ENCODE measurements at regions of chr6 and their contacts with region 1.

Region 1: DNA sequence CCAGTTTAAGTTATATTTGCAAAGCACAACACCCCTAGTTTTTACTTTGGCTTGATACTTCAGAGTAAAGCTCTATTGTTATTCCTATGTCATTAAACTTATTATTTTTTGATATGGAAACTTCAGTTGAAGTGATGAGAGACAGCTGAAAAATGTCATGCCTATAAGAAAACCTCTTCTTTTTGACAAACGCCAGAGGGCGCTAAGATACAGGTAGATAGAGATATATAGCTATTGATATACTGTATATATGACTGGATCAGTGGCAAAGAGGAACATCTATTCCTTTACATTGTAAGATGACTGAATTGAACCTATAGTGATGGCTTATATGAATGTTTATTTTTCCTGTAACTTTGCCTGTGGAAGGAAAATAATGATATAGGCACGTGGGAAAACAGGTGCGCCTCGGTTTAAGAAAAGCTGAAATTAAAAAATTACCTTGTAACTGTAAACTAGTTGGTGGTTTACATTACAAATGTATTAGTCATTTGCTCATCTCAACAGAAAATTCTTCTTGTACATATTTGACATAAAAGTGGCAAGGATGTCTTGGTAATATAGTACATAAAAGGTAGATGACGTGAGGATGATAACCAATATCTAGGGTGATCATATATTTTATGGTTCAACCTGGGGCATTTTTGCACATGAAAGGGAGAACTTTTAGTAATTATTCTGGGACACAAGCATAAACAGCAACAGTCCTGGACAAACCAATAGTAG is 74.1 kb downstream of the LAMA4 start:
- DNase-seq: no peak
- ATAC-seq: peak; percentile 83

Region 2: GRCh38 chr6:111938716-111939115 is 241.5 kb before region 1 on chr6:
- intact Hi-C with region 1: no loop called
- DNase-seq: no peak
- ATAC-seq: no peak

Region 3: GRCh38 chr6:112253841-112254816 is 73.9 kb after region 1 on chr6 and contains the start of gene LAMA4:
- intact Hi-C with region 1: loop called (anchors 5 kb)
- DNase-seq: peak; percentile 79
- ATAC-seq: peak; percentile 77
- total RNA-seq, gene LAMA4: 50.6 TPM

Region 4: GRCh38 chr6:112311950-112312547 is 131.8 kb after region 1 on chr6:
- intact Hi-C with region 1: loop called (anchors 2 kb)
- DNase-seq: no peak
- ATAC-seq: no peak

Measured in left ventricle myocardium superior (tissue), 1 donor.